ENCODE measurements at regions of chr3 and their contacts with region 1.

Region 1: DNA sequence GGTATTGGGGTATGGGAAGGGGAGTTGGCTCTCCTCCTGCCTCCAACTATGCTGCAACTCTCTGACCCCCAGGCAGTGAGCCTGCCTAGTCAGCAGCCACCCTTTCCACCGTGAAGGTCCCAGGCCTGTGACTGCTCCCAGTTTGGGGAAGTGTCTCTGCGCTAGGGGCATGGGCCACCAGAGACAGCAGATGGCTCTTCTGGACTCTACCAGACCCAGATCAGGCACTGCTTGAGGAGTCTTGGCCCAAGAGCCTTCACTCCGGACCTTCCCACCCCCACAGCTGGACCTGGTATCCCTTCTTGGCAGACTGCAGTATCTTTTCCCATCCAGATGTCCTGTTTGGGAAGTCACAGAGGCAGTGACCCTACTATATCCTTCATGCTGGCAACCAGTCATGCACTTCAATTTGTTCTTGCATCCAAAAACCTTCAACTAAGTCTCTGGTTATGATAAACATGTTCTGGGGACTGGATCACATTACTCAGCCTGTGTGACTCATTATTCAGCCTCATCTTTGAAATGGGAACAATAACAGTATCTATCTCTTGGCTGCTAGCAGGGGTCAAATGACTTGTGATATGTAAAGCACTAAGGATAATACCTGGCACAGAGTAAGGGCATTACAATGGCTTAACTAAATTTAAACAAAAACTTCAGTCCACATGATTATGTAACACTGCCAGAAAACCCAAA is 62.7 kb downstream of the POMGNT2 start:
- DNase-seq: no peak
- H3K4me3 ChIP-seq: no peak overlapping the region
- H3K27ac ChIP-seq: peak overlapping the region in 39 of 59 donors; percentile 4 to 78 (median 36)
- H3K27me3 ChIP-seq: no peaks in the 10 kb centered on the region
- CTCF ChIP-seq: no peak

Region 2: DNA sequence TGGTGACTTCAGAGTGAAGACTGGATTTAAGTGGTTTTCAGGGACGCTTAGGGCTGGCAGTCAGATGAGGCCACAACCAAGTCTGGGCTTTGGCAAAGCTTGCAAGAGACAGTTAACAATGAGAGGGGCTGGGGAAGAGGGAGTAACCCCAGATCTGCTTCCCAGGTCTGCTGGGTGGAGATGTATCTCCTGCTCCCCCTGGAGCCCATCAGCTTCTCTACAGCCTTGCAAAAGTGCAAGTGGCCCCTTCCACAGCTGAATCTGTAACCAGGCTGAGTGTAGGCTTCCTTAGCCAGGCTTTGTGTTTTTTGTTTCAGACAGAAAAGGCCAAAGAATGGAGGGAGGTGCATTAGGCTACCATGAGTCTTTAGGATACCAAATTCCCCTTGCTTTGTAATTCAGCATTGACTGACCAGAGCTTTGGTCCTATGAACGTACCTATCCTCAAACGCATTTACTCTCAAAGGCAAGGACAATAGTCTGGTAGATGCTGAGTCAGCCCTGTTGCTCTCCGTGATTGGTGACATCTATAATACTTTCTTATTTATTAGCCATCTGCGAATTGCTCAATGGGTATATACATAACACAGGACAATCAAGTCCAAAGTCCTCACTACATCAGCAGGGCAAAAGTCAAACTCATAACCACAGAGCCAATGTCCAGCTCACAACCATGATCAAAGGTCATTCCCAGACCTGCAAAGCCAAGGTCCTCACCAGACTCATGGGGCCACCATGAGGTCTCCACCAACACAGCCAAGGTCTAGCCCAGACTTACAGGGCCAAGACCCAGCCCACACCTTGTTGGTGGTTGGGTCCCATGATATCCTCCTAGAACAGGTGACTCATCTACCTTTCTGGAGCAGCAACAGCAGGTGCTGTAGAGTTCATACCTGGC is 287.3 kb before region 1 on chr3:
- intact Hi-C with region 1: no loop called
- DNase-seq: peak in 1 of 10 donors; percentile 52
- H3K4me3 ChIP-seq: no peak overlapping the region
- H3K27ac ChIP-seq: peak overlapping the region in 2 of 59 donors; percentile 24 to 32
- H3K27me3 ChIP-seq: no peaks in the 10 kb centered on the region
- CTCF ChIP-seq: peak in 54 of 56 donors; percentile 15 to 72 (median 52)

Region 3: GRCh38 chr3:42991341-42992315 is 51.6 kb before region 1 on chr3:
- intact Hi-C with region 1: loop called in 1 of 2 experiments (anchors 2 kb)
- DNase-seq: peak in 8 of 10 donors; percentile 51 to 77 (median 62)
- H3K4me3 ChIP-seq: peak overlapping the region in 2 of 59 donors; percentile 5 to 17
- H3K27ac ChIP-seq: peak overlapping the region in 52 of 59 donors; percentile 4 to 84 (median 58)
- H3K27me3 ChIP-seq: no peaks in the 10 kb centered on the region
- CTCF ChIP-seq: no peak

Region 4: GRCh38 chr3:43144761-43145490 is 101.7 kb after region 1 on chr3:
- intact Hi-C with region 1: no loop called
- DNase-seq: no peak
- H3K4me3 ChIP-seq: no peak overlapping the region
- H3K27ac ChIP-seq: no peak overlapping the region
- H3K27me3 ChIP-seq: no peaks in the 10 kb centered on the region
- CTCF ChIP-seq: no peak

Measured in dorsolateral prefrontal cortex (tissue), 120 donors.